Activated B cell treated with CpG ODN at 0.5 μM for 24 hours (primary cell): ENCODE measurements at regions of chr16 and their contacts with region 1.

Region 1: GRCh38 chr16:13957197-13958078 is 37.5 kb downstream of the ERCC4 start:
- DNase-seq: no peak
- ATAC-seq: peak; percentile 83
- H3K4me3 Mint-ChIP-seq: peak overlapping the region; percentile 74
- H3K27ac Mint-ChIP-seq: peak overlapping the region; percentile 71
- H3K4me1 Mint-ChIP-seq: peaks cover 29% of the 10 kb centered on the region
- H3K27me3 Mint-ChIP-seq: peaks cover 9% of the 10 kb centered on the region
- CTCF ChIP-seq: no peak

Region 2: GRCh38 chr16:13997933-13998332 is 40.5 kb after region 1 on chr16:
- CTCF ChIA-PET with region 1: no interaction called
- POLR2A ChIA-PET with region 1: no interaction called
- intact Hi-C with region 1: loop called (anchors 5 kb)
- DNase-seq: no peak
- ATAC-seq: peak; percentile 94
- H3K4me3 Mint-ChIP-seq: peak overlapping the region; percentile 21
- H3K27ac Mint-ChIP-seq: peak overlapping the region; percentile 73
- H3K4me1 Mint-ChIP-seq: peaks cover 51% of the 10 kb centered on the region
- H3K27me3 Mint-ChIP-seq: no peaks in the 10 kb centered on the region
- CTCF ChIP-seq: no peak

Region 3: DNA sequence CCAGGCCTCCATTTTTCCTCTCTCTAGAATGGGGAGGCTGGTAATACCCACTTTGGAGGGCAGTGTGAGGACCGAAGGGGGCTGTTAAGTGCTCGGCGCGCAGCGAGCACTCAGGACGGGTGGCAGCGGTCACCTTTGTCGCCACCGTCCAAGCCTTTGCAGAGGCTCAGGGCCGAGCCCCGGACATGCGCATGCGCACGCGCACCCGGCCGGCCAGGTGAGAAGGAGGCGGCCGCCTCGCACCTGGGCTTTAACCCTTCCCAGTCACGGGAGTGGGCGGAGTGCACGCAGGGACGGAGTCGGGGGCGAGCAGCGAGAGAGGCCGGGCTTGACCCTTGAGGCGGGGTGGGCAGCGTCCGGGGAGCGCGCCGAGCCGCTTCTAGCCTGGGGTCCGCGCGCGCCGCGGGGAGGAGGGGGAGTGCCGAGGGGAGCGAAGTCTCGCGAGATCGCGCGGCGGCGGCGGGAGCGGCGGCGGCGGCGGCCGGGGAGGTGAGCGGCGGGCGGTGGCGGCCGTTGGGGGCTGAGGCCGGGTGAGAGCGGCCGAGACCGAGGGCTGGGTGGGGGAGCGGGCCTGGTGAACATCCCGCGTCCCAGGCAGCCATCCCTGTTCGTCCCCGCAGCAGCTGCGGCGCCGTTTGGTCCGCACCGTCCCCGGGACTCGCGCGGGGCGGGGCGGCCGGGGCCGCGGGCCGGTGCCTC is 113.6 kb after region 1 on chr16 and contains the start of gene MRTFB:
- CTCF ChIA-PET with region 1: no interaction called
- POLR2A ChIA-PET with region 1: no interaction called
- intact Hi-C with region 1: loop called (anchors 10 kb)
- DNase-seq: peak; percentile 85
- ATAC-seq: peak; percentile 89
- H3K4me3 Mint-ChIP-seq: peak within 1 kb of the TSS; percentile 92
- H3K27ac Mint-ChIP-seq: peak within 1 kb of the TSS; percentile 73
- H3K4me1 Mint-ChIP-seq: peaks cover 6% of the 10 kb centered on the region
- H3K27me3 Mint-ChIP-seq: no peaks in the 10 kb centered on the region
- CTCF ChIP-seq: no peak
- total RNA-seq, gene MRTFB: 20.9 and 23.9 TPM in 2 replicates